ENCODE measurements at regions of chr1 and their contacts with region 1.

Region 1: DNA sequence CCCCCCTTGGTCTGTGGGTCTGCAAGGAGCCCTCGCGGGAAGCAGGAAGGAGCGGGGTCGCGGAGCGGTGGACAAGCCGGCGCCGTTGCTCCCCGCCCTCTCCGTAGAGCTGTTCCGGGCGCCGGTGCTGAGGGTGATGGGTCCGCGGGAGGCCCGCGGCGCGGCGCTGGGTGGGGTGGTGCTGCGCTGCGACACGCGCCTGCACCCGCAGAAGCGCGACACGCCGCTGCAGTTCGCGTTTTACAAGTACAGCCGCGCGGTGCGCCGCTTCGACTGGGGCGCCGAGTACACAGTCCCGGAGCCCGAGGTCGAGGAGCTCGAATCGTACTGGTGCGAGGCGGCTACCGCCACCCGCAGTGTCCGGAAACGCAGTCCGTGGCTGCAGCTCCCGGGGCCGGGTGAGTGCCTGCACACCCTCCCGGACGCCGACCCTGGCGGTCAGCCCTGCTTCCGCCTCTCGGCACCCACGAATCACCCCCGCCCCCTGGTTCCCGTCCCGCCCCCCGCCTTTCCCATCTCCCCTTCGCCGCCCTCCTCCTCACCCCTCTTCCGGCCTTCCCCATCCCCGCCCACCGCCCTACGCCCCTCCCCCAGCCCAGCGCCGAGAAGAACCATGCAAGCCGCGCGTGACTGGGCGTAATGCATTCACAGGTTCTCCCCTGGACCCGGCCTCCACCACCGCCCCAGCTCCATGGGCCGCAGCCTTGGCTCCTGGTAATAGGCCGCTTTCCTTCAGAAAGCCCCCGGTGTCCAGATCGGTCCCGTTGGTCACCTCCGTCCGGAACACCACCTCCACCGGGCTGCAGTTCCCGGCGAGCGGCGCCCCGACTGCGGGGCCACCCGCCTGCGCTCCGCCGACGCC is 5.5 kb downstream of the FCRLB start:
- DNase-seq: peak; percentile 53 to 88 (median 73)
- ATAC-seq: peak; percentile 66
- H3K4me3 ChIP-seq: peak overlapping the region; percentile 65 to 92
- H3K4me3 Mint-ChIP-seq: peak overlapping the region; percentile 95
- H3K27ac ChIP-seq: peak overlapping the region; percentile 75 to 84
- H3K27ac Mint-ChIP-seq: peak overlapping the region; percentile 91
- H3K4me1 ChIP-seq: peaks cover 30% of the 10 kb centered on the region
- H3K4me1 Mint-ChIP-seq: peaks cover 38% of the 10 kb centered on the region
- H3K27me3 ChIP-seq: no peaks in the 10 kb centered on the region
- H3K27me3 Mint-ChIP-seq: no peaks in the 10 kb centered on the region
- CTCF ChIP-seq: no peak

Region 2: DNA sequence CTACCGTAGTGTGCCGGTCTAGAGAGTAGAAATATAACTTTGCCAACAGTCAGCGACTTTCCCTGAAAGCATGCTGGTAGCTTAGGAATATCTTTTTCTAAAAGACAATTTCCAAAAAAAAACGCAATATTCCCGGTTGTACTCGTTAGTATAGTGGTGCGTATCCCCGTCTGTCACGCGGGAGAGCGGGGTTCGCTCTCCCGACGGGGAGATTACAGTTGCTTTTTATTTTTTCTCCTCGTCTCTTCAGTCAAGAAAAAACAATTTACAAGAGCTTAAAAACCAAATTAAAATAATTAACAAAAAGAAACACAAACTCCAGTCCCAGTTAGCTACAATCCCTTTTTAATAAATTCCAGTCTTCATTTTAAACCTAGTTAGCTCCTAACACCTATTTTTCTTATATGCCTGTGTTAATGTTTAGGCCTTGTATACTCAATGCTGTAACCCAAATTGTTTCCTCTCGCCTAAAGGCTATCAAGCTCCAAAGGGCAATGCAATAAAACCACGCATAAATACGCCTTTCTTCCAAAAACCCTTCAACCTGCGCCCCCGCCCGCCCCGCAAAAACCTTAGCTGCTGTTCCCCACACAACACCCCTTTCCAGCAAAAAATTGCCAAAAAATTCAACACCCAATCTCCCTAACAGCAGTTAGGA is 194.7 kb before region 1 on chr1:
- CTCF ChIA-PET with region 1: no interaction called
- POLR2A ChIA-PET with region 1: interaction called, 14 read pairs
- intact Hi-C with region 1: loop called in 1 of 2 experiments (anchors 2 kb)
- DNase-seq: no peak
- ATAC-seq: no peak
- H3K4me3 ChIP-seq: no peak overlapping the region
- H3K4me3 Mint-ChIP-seq: no peak overlapping the region
- H3K27ac ChIP-seq: no peak overlapping the region
- H3K27ac Mint-ChIP-seq: peak overlapping the region; percentile 22
- H3K4me1 ChIP-seq: peaks cover 7% of the 10 kb centered on the region
- H3K4me1 Mint-ChIP-seq: peaks cover 11% of the 10 kb centered on the region
- H3K27me3 ChIP-seq: no peaks in the 10 kb centered on the region
- H3K27me3 Mint-ChIP-seq: no peaks in the 10 kb centered on the region
- CTCF ChIP-seq: no peak

Region 3: DNA sequence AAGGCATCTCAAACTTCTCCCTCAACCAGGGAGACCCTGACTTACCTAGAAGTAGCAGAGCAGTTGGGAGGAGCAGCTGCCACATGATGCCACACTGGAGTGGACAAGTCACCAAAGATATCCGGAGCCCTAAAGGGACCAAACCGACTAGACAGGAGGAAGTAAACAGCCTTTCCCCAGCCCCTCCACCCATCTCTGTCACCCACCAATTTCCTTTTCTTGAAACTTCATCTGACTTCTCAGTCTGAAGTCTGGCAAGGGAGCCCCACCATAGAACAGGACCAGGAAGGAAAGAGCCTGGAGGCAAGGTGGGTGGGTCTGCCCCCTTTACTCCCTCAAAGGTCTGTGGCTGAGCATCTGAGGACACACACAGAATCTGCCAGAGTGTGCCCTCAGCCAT is 177.2 kb before region 1 on chr1 and contains the start of gene FCGR3A:
- CTCF ChIA-PET with region 1: no interaction called
- POLR2A ChIA-PET with region 1: no interaction called
- intact Hi-C with region 1: no loop called
- DNase-seq: peak in 1 of 9 experiments; percentile 53
- ATAC-seq: no peak
- H3K4me3 ChIP-seq: peak within 1 kb of the TSS in 1 of 2 experiments; percentile 48
- H3K4me3 Mint-ChIP-seq: peak within 1 kb of the TSS; percentile 15
- H3K27ac ChIP-seq: peak within 1 kb of the TSS in 1 of 2 experiments; percentile 85
- H3K27ac Mint-ChIP-seq: peak within 1 kb of the TSS; percentile 41
- H3K4me1 ChIP-seq: peaks cover 9% of the 10 kb centered on the region
- H3K4me1 Mint-ChIP-seq: peaks cover 20% of the 10 kb centered on the region
- H3K27me3 ChIP-seq: no peaks in the 10 kb centered on the region
- H3K27me3 Mint-ChIP-seq: no peaks in the 10 kb centered on the region
- CTCF ChIP-seq: no peak
- total RNA-seq, gene FCGR3A: 0.98 to 1.00 TPM

Region 4: GRCh38 chr1:161738627-161739287 is 11.9 kb after region 1 on chr1:
- CTCF ChIA-PET with region 1: interaction called, 70 read pairs
- POLR2A ChIA-PET with region 1: interaction called, 52 read pairs
- intact Hi-C with region 1: loop called (anchors 1 to 2 kb)
- DNase-seq: peak in 8 of 9 experiments; percentile 43 to 87 (median 68)
- ATAC-seq: peak; percentile 83
- H3K4me3 ChIP-seq: no peak overlapping the region
- H3K4me3 Mint-ChIP-seq: no peak overlapping the region
- H3K27ac ChIP-seq: peak overlapping the region in 1 of 2 experiments; percentile 53
- H3K27ac Mint-ChIP-seq: peak overlapping the region; percentile 42
- H3K4me1 ChIP-seq: peaks cover 25% of the 10 kb centered on the region
- H3K4me1 Mint-ChIP-seq: peaks cover 26% of the 10 kb centered on the region
- H3K27me3 ChIP-seq: no peaks in the 10 kb centered on the region
- H3K27me3 Mint-ChIP-seq: no peaks in the 10 kb centered on the region
- CTCF ChIP-seq: peak; percentile 27

Region 5: DNA sequence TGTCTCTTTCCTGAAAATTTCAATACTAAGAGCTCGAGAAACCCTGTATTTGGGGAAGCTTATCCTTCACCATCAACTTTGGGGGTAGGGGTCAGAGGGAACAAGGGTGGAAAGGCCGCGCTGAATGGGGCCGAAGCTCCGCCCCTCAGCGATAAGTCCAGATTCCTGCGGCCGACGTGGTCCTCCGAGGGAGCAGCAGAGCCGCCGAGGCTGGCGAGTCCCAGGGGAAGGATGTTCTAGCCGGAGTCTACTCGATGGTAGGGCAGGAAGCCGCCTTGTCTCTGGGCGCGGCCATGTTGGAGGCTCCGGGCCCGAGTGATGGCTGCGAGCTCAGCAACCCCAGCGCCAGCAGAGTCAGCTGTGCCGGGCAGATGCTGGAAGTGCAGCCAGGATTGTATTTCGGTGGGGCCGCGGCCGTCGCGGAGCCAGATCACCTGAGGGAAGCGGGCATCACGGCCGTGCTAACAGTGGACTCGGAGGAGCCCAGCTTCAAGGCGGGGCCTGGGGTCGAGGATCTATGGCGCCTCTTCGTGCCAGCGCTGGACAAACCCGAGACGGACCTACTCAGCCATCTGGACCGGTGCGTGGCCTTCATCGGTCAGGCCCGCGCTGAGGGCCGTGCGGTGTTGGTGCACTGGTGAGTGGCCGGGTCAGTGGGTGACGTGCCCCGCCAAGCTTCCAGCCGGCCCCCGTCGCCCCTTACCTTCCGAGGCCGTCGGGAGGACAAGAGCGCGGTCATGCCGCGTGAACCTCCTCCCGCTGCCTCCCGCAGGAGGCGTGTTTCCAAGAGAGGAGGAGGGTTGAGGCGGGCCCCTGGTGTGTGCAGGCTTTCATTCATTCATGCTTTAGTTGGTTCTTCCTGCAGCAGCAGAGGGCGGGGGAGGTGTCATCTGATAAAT is 22.9 kb after region 1 on chr1 and contains the start of gene DUSP12:
- CTCF ChIA-PET with region 1: interaction called, 18 read pairs
- POLR2A ChIA-PET with region 1: interaction called, 26 read pairs
- intact Hi-C with region 1: loop called in 1 of 2 experiments (anchors 2 kb)
- DNase-seq: peak; percentile 70 to 92 (median 85)
- ATAC-seq: peak; percentile 95
- H3K4me3 ChIP-seq: peak within 1 kb of the TSS; percentile 88 to 99
- H3K4me3 Mint-ChIP-seq: peak within 1 kb of the TSS; percentile 100
- H3K27ac ChIP-seq: peak within 1 kb of the TSS; percentile 68 to 76
- H3K27ac Mint-ChIP-seq: peak within 1 kb of the TSS; percentile 96
- H3K4me1 ChIP-seq: peaks cover 23% of the 10 kb centered on the region
- H3K4me1 Mint-ChIP-seq: peaks cover 41% of the 10 kb centered on the region
- H3K27me3 ChIP-seq: no peaks in the 10 kb centered on the region
- H3K27me3 Mint-ChIP-seq: peaks cover 6% of the 10 kb centered on the region
- CTCF ChIP-seq: no peak
- total RNA-seq, gene DUSP12: 27.9 to 31.1 TPM